Body of pancreas (tissue), 4 donors: ENCODE measurements at regions of chr9 and their contacts with region 1.

Region 1: DNA sequence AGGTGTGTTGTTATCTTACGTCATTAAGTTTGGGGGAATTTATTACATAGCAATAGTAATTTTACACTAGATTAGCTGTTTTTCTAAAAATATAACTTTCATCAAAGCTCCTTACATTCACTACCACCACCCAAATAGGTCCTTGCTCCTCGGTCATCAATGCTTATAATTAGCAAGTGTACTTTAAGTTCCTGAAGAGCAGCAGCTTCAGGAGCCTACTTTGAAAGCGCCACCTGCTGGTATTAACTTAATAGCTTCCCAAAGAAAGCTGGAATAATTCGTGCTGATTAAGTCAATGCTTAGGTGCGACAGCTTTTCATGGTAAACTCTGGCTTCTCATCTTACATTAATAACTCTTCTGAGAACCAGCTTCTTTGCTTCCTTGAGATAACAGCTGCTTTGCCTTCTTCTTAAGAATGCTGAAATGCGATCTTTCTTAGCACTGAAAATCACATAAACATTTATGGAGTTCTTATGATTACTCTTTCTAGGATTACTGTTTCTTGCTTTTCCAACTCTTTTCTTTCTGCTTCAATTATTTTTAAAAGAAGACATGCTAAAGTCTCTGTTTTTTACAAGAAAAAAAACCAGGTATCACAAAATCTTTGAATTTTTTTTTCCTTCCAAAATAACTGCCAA is 10.0 kb upstream of the C5 start:
- DNase-seq: peak; percentile 31 to 69 (median 48)
- ATAC-seq: peak; percentile 46
- H3K4me3 ChIP-seq: no peak overlapping the region
- H3K27ac ChIP-seq: no peak overlapping the region
- H3K4me1 ChIP-seq: peaks cover 11% of the 10 kb centered on the region
- H3K27me3 ChIP-seq: no peaks in the 10 kb centered on the region
- CTCF ChIP-seq: peak; percentile 44 to 80 (median 70)
- POLR2A ChIP-seq: no peak

Region 2: GRCh38 chr9:120767456-120768167 is 292.5 kb before region 1 on chr9:
- intact Hi-C with region 1: loop called (anchors 10 kb)
- DNase-seq: no peak
- ATAC-seq: no peak
- H3K4me3 ChIP-seq: no peak overlapping the region
- H3K27ac ChIP-seq: no peak overlapping the region
- H3K4me1 ChIP-seq: no peaks in the 10 kb centered on the region
- H3K27me3 ChIP-seq: no peaks in the 10 kb centered on the region
- CTCF ChIP-seq: no peak
- POLR2A ChIP-seq: no peak

Region 3: DNA sequence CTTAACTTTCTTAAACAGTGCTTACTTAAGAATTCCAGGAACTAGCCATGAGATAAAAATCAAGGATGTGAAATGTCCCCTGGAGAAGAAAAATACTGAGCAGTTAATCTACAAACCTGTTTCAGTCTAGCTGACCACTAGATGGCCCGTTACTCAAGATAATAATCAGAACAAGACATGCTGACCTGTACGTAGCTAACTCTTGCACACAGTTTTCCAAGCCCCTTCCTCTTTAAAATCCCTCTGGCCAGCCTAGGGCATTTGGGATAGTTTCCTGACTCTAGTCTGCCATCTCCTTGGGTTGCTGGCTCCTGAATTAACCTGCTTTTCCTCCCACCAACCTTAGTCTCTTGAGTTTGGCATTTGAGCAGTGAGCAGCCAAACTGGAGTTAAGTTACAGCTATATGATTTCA is 74.3 kb before region 1 on chr9:
- intact Hi-C with region 1: loop called (anchors 10 kb)
- DNase-seq: peak in 1 of 4 donors; percentile 20
- ATAC-seq: no peak
- H3K4me3 ChIP-seq: no peak overlapping the region
- H3K27ac ChIP-seq: no peak overlapping the region
- H3K4me1 ChIP-seq: no peaks in the 10 kb centered on the region
- H3K27me3 ChIP-seq: no peaks in the 10 kb centered on the region
- CTCF ChIP-seq: peak in 5 of 7 experiments; percentile 10 to 55 (median 50)
- POLR2A ChIP-seq: no peak